ENCODE measurements at regions of chr5 and their contacts with region 1.

Region 1: DNA sequence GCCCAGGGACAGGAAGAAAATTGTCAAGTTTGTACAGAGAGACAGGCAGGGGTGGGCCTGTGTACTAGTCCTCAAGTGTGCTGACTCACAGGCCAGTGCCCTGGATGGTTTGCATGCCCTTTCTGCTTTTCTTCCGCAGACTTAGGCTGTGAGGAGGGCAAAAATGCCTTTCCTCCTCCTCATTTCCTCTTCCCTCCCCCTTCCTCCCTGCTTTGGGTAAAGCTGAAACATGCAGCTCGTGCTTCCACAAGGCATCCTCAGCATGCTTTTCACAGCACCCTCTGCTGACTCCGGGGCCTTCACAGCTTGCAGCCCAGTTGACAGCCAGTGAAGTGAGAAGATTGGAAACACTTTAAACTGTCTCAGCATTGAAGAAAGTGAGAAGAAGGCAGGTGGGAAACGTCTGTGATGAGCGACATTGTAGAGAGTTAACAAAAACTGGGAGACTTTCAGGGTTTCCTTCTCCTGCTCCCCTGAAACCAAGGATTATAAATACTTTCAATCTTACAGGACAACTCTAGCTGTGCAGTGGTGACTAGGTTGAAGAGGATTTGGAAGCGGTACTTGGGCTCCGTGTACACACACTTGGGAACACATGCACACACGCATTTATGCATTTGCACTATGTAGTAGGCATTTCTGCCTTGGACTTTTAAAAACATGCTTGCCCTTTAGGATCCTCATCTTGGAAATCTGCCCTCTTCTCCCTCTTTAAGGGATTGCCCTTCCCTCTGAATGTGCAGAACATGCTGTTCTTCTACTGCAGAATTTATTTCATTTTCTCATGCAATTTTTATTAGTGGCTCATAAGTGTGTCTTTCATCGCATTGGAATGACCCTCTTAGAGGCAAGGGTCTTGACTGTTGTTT is 138.8 kb downstream of the GRIA1 start:
- DNase-seq: no peak
- ATAC-seq: no peak
- H3K4me3 ChIP-seq: no peak overlapping the region
- H3K27ac ChIP-seq: no peak overlapping the region
- H3K4me1 ChIP-seq: no peaks in the 10 kb centered on the region
- H3K27me3 ChIP-seq: no peaks in the 10 kb centered on the region
- CTCF ChIP-seq: no peak
- EP300 ChIP-seq: no peak
- POLR2A ChIP-seq: no peak
- RAD21 ChIP-seq: no peak

Region 2: DNA sequence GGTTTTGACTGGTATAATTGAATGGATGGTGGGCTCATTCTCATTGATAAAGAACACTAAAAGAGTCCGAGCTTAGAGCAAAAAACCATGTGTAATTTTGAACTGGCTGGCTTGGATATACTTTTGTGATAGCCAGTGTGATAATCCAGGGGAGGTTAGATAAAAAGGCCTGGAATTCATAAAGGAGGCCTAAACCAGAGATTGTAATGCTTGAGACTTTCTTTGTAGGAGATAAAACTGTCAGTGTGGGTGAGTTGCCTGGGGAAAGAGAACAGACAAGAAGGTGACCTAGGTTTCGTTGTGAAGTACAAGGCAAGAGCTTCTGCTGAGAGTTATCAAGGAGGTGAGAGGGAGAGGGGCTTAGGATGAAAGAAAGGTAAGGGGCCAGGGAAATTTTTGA is 1207.2 kb before region 1 on chr5:
- CTCF ChIA-PET with region 1: no interaction called
- POLR2A ChIA-PET with region 1: no interaction called
- in situ Hi-C with region 1: no loop called
- intact Hi-C with region 1: no loop called
- DNase-seq: no peak
- ATAC-seq: no peak
- H3K4me3 ChIP-seq: no peak overlapping the region
- H3K27ac ChIP-seq: no peak overlapping the region
- H3K4me1 ChIP-seq: no peaks in the 10 kb centered on the region
- H3K27me3 ChIP-seq: no peaks in the 10 kb centered on the region
- CTCF ChIP-seq: no peak
- EP300 ChIP-seq: no peak
- POLR2A ChIP-seq: no peak
- RAD21 ChIP-seq: no peak

Region 3: GRCh38 chr5:153565822-153566221 is 63.4 kb before region 1 on chr5:
- CTCF ChIA-PET with region 1: no interaction called
- POLR2A ChIA-PET with region 1: no interaction called
- in situ Hi-C with region 1: no loop called
- intact Hi-C with region 1: loop called (anchors 2 kb)
- DNase-seq: no peak
- ATAC-seq: no peak
- H3K4me3 ChIP-seq: no peak overlapping the region
- H3K27ac ChIP-seq: no peak overlapping the region
- H3K4me1 ChIP-seq: no peaks in the 10 kb centered on the region
- H3K27me3 ChIP-seq: no peaks in the 10 kb centered on the region
- CTCF ChIP-seq: no peak
- EP300 ChIP-seq: no peak
- POLR2A ChIP-seq: no peak
- RAD21 ChIP-seq: no peak

Region 4: DNA sequence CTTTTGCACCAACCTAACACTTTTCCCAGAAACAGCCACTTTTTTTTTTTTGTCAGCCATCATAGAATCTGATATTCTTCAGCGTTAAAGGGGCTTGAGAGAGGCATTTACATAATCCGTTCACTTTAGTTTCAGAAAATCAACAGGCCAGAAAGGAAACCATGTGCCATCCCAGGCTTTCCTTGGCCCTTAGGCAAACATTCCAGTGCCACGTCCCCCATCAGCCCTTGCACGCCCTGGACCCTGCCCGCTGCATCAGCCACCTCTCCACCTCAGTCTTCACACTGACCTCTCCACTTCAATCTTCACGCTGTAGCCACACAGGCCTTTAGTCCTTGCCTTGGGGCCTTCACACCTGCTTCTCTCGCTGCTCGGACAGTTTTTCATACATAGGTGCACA is 15.6 kb before region 1 on chr5:
- CTCF ChIA-PET with region 1: no interaction called
- POLR2A ChIA-PET with region 1: no interaction called
- in situ Hi-C with region 1: no loop called
- intact Hi-C with region 1: loop called (anchors 1 kb)
- DNase-seq: no peak
- ATAC-seq: no peak
- H3K4me3 ChIP-seq: no peak overlapping the region
- H3K27ac ChIP-seq: no peak overlapping the region
- H3K4me1 ChIP-seq: 0 out of 2 replicates have a peak, but pooled peaks cover 7% of the 10 kb centered on the region
- H3K27me3 ChIP-seq: no peaks in the 10 kb centered on the region
- CTCF ChIP-seq: no peak
- EP300 ChIP-seq: no peak
- POLR2A ChIP-seq: no peak
- RAD21 ChIP-seq: no peak

Measured in HepG2 (cell line).